ENCODE measurements at regions of chr11 and their contacts with region 1.

Region 1: GRCh38 chr11:102360681-102361080 is 13.7 kb downstream of the BIRC2 start:
- DNase-seq: no peak
- H3K4me3 ChIP-seq: no peak overlapping the region
- H3K27ac ChIP-seq: no peak overlapping the region
- H3K4me1 ChIP-seq: peaks cover 0 to 5% (median 0%) of the 10 kb centered on the region in 4 experiments
- H3K27me3 ChIP-seq: no peaks in the 10 kb centered on the region

Region 2: DNA sequence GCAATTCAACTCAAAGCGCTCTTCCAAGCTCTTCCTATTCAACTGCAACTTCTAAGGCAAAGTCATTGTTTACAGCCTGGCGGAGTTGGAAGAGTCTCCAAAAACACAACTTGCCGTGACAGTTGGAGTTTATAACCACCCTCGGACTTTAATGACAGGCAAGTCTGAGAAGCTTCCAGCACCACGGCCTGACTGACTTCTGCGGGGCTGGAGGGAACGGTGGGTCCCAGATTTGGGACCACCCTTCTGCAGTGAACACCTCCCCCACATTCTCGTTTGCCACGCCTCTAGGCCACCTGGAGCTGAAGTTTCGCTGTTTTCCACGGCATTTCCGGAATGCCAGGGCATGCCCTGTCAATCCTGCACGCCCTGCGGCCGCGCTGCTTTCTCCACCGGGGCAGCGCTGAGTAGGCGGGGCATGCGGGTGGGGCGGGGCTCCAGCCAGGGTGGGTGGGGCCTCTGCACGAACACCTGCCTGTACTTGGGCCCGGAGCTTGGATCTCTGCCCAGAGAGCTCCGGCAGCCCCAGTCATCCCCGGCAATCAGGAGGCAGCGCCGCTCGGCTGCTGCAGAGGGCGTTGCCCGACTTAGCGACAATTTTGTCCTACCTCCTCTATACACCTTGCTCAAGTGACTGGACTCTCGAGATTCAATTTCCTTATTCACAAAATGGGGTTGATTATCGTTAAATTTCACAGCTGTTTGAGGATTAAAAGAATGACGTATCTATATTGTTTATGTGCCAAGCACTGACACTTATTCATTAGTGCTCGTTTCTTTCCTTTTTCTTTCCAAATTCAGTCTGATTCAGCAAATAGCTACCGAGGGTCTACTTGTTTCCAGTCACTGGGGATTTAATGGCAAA is 92.1 kb before region 1 on chr11:
- CTCF ChIA-PET with region 1: no interaction called
- POLR2A ChIA-PET with region 1: no interaction called
- DNase-seq: peak; percentile 87 to 91 (median 91)
- H3K4me3 ChIP-seq: peak overlapping the region in 5 of 7 experiments; percentile 30 to 71 (median 48)
- H3K27ac ChIP-seq: no peak overlapping the region
- H3K4me1 ChIP-seq: peaks cover 5 to 15% (median 9%) of the 10 kb centered on the region in 4 experiments
- H3K27me3 ChIP-seq: peaks cover 3 to 50% (median 24%) of the 10 kb centered on the region in 5 experiments

Region 3: GRCh38 chr11:102346748-102347461 is 13.8 kb before region 1 on chr11 and contains the start of gene BIRC2:
- CTCF ChIA-PET with region 1: interaction called, 20 read pairs
- POLR2A ChIA-PET with region 1: interaction called, 3 read pairs
- DNase-seq: peak; percentile 95 to 98 (median 97)
- H3K4me3 ChIP-seq: peak within 1 kb of the TSS; percentile 84 to 98 (median 94)
- H3K27ac ChIP-seq: peak within 1 kb of the TSS; percentile 95 to 98
- H3K4me1 ChIP-seq: peaks cover 10 to 27% (median 25%) of the 10 kb centered on the region in 4 experiments
- H3K27me3 ChIP-seq: no peaks in the 10 kb centered on the region